B cell (primary cell): ENCODE measurements at regions of chr17 and their contacts with region 1.

Region 1: DNA sequence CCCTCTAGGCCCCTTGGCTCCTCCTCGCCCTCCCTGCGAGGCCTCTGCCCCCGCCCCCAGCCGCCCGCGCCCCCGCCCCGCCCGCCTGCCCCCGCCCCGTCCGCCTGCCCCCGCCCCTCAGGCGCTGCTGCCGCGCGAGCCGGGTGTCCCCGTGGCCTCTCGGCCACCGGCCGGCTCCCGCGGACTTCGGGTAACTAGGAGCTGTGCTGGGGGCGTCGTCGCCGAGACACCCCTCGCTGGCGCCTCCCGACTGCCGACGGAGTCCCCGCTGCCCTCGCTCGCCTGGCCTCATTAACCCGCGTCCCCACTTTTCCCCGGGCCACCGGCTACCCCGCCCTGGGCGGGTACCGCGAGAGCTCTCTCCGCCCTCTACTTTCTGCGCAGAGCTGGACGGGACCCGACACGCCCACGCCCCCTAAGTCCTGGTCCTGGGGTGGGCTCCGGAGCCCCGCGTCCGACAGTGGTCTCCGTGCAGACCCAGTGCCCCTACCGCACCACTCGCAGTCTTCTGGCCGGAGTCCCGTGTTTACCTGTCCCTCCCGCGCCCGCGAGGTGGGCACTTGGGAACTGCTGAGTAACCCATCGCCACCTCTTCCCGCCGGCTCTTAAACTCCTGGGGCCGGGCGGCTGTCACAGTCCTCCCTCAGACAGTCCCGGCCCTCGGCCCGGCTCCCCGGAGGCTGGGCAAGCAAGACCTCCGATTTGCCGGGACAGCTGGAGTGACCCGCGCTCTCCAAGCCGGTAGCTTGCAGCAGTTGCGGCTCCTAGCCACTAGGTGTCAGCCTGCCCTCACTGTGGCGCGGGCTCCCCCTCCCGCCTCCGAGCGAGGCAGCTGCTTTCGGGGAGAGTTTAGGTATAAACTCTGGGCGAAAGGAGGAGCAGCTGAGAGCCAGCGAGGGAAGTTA is at the start of gene TLCD1:
- DNase-seq: peak; percentile 93
- ATAC-seq: peak; percentile 46
- H3K4me3 ChIP-seq: peak within 1 kb of the TSS; percentile 40 to 77 (median 66)
- H3K4me3 Mint-ChIP-seq: peak within 1 kb of the TSS; percentile 98
- H3K27ac ChIP-seq: peak within 1 kb of the TSS; percentile 90 to 97
- H3K27ac Mint-ChIP-seq: peak within 1 kb of the TSS; percentile 100
- H3K4me1 ChIP-seq: peaks cover 38 to 65% of the 10 kb centered on the region in 2 donors
- H3K4me1 Mint-ChIP-seq: peaks cover 67% of the 10 kb centered on the region
- H3K27me3 ChIP-seq: no peaks in the 10 kb centered on the region
- H3K27me3 Mint-ChIP-seq: no peaks in the 10 kb centered on the region
- CTCF ChIP-seq: peak; percentile 99
- total RNA-seq, gene TLCD1: 3.1 and 3.4 TPM in 2 replicates

Region 2: GRCh38 chr17:28737859-28738679 is 11.6 kb after region 1 on chr17:
- CTCF ChIA-PET with region 1: interaction called, 1,020 read pairs
- POLR2A ChIA-PET with region 1: interaction called, 511 read pairs
- intact Hi-C with region 1: loop called (anchors 1 kb)
- DNase-seq: peak; percentile 94
- ATAC-seq: peak; percentile 73
- H3K4me3 ChIP-seq: peak overlapping the region in 4 of 5 experiments; percentile 15 to 39 (median 28)
- H3K4me3 Mint-ChIP-seq: peak overlapping the region; percentile 94
- H3K27ac ChIP-seq: peak overlapping the region; percentile 95 to 100
- H3K27ac Mint-ChIP-seq: peak overlapping the region; percentile 100
- H3K4me1 ChIP-seq: peaks cover 83 to 85% of the 10 kb centered on the region in 2 donors
- H3K4me1 Mint-ChIP-seq: peaks cover 80% of the 10 kb centered on the region
- H3K27me3 ChIP-seq: no peaks in the 10 kb centered on the region
- H3K27me3 Mint-ChIP-seq: no peaks in the 10 kb centered on the region
- CTCF ChIP-seq: no peak

Region 3: DNA sequence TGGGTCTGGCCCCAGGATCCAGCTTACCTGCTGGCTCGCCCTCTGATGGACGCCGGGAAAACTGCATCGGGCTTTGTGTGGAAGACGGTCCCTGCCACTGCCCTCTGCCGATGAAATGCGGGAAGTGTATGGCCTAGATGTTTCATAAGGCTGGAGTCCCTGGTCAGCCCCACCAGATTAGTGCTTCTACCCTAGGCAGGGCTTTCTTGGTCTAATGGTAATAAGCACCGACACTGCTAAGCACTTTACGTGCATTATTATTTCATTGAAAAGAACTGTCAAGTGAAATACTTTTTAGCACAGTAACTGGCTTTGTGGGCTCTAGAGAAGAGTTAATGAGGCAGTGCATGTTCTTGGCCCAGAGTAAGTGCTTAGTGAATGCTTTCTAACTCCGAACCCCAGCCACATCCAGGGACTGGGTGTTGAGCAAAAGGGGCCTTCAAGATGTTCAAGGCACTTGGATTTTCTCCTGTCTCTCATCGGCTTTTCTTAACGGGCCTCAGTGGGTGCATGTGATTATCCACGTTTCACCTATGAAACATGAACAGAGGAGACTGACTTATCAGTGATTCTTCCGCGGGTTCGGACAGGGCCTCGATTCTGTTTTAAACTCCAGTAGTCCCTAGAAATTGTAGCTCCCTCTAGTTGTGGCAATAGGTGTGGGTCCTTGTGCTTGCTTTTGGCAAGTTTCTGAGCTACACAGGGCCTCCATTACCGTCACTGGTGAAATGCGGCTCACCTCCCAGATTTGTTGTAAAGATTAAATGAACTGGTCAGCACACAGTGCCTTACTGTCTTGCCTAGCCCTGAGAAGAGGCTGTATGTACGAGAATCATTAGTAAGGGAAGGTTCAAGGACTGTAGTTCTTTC is 23.9 kb after region 1 on chr17:
- CTCF ChIA-PET with region 1: interaction called, 1,020 read pairs
- POLR2A ChIA-PET with region 1: interaction called, 511 read pairs
- intact Hi-C with region 1: loop called (anchors 1 kb)
- DNase-seq: peak; percentile 93
- ATAC-seq: peak; percentile 97
- H3K4me3 ChIP-seq: no peak overlapping the region
- H3K4me3 Mint-ChIP-seq: no peak overlapping the region
- H3K27ac ChIP-seq: peak overlapping the region in 1 of 2 donors; percentile 41
- H3K27ac Mint-ChIP-seq: peak overlapping the region; percentile 67
- H3K4me1 ChIP-seq: peaks cover 32 to 34% of the 10 kb centered on the region in 2 donors
- H3K4me1 Mint-ChIP-seq: peaks cover 42% of the 10 kb centered on the region
- H3K27me3 ChIP-seq: no peaks in the 10 kb centered on the region
- H3K27me3 Mint-ChIP-seq: no peaks in the 10 kb centered on the region
- CTCF ChIP-seq: peak; percentile 100

Region 4: DNA sequence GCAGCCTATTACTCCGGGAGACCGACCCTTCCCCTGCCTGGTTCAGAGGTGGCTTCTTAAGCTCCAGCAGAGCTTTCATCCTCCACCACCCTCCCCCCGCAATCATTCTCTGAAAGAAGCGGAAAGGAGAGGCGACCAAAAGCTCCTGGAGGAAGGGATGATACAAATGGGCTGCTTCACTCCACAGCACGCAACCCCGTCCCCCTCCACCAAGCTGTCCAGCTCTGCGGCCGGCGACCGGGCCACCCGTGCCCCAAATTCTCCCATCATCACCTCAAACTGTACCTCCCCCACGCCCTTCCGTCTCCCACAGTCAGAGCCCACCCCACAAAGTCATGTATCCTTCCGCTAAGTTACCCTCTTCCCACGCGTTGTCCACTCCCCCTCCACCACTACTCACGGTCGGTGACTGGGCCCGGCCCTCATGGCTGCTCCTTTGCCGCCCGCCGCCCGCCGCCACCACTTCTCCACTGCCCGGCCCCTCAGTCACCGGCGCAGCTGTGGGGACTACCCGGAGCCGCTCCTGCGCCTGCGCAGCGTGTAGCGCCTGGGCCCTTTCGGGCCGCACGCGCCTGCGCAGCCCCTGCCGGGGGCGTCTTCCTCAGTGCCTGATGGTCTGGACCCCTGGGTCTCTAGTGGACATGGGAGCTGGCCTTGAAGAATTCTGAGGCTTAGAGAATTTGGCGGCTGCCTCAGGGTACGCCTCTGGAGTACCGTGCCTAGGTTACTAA is 116.0 kb after region 1 on chr17 and contains the start of gene FAM222B:
- CTCF ChIA-PET with region 1: interaction called, 27 read pairs
- POLR2A ChIA-PET with region 1: interaction called, 11 read pairs
- intact Hi-C with region 1: no loop called
- DNase-seq: peak; percentile 91
- ATAC-seq: peak; percentile 98
- H3K4me3 ChIP-seq: peak within 1 kb of the TSS; percentile 67 to 92 (median 87)
- H3K4me3 Mint-ChIP-seq: peak within 1 kb of the TSS; percentile 97
- H3K27ac ChIP-seq: peak within 1 kb of the TSS; percentile 70 to 87
- H3K27ac Mint-ChIP-seq: peak within 1 kb of the TSS; percentile 96
- H3K4me1 ChIP-seq: peaks cover 10 to 15% of the 10 kb centered on the region in 2 donors
- H3K4me1 Mint-ChIP-seq: peaks cover 23% of the 10 kb centered on the region
- H3K27me3 ChIP-seq: no peaks in the 10 kb centered on the region
- H3K27me3 Mint-ChIP-seq: no peaks in the 10 kb centered on the region
- CTCF ChIP-seq: no peak
- total RNA-seq, gene FAM222B: 21.9 and 23.1 TPM in 2 replicates

Region 5: DNA sequence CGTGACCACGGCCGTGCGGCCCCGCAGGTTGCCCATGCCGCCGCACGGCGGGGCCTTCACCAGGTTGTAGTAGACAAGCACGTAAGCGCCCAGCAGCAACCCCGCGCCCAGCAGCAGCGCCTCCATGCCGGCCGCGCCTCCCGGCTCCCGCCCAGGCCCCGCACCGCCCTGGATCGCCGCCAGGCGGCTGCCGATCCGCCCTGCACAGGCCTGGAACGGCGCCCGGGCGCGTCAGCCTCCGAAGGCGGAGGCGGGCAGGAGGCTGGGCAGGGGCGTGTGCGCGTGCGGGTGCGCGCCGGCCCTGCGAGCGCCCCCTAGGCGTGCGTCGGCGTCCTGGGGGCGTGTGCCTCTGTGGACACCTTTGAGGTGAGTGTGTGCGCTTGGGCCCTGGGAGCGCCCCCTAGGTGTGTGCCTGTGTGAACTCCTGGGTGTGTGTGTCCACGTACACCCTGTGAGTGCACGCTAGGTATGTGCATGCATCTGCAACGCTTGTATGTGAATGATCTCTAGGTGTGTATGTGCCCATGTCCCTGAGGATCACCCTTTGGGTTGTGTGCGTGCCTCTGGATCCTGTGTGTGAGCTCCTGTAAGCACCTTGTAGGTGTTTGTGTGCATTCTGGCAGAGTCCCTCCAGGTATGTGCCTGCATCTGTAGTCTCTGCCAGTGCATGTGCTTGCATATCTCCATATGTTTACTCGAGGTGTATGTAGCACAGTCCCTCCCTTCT is 176.5 kb after region 1 on chr17 and contains the start of gene DHRS13:
- CTCF ChIA-PET with region 1: interaction called, 31 read pairs
- POLR2A ChIA-PET with region 1: interaction called, 17 read pairs
- intact Hi-C with region 1: loop called (anchors 1 kb)
- DNase-seq: peak; percentile 98
- ATAC-seq: peak; percentile 90
- H3K4me3 ChIP-seq: peak within 1 kb of the TSS; percentile 68 to 90 (median 76)
- H3K4me3 Mint-ChIP-seq: peak within 1 kb of the TSS; percentile 88
- H3K27ac ChIP-seq: peak within 1 kb of the TSS; percentile 61 to 77
- H3K27ac Mint-ChIP-seq: peak within 1 kb of the TSS; percentile 88
- H3K4me1 ChIP-seq: peaks cover 18 to 32% of the 10 kb centered on the region in 2 donors
- H3K4me1 Mint-ChIP-seq: peaks cover 34% of the 10 kb centered on the region
- H3K27me3 ChIP-seq: no peaks in the 10 kb centered on the region
- H3K27me3 Mint-ChIP-seq: no peaks in the 10 kb centered on the region
- CTCF ChIP-seq: peak; percentile 100
- total RNA-seq, gene DHRS13: 27.1 and 28.1 TPM in 2 replicates